ENCODE measurements at regions of chr1 and their contacts with region 1.

Region 1: DNA sequence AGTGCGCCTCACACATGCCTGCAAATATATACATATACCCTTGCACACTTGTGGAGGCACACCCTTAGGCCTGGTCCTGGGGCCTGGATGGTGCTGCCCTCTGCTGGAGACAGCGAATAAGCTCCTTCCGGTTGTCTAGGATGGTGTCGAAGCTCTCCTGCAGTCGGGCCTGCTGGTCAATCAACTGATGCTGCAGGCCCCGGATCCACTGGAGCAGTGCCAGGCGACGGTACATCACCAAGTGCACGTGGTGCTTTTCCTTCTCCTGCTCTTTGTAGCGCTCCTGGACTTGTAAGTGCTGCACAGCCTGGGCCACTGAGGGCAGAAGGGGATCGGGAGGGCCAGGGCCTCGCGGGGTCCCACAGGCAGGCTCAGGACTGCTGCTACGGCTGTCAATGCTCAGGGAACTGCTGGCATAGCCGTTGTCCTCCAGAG is 3.1 kb downstream of the C1orf216 start:
- DNase-seq: peak; percentile 82
- H3K4me3 Mint-ChIP-seq: no peak overlapping the region
- H3K27ac Mint-ChIP-seq: no peak overlapping the region
- H3K4me1 Mint-ChIP-seq: peaks cover 37% of the 10 kb centered on the region
- H3K27me3 Mint-ChIP-seq: no peaks in the 10 kb centered on the region
- CTCF ChIP-seq: peak; percentile 80

Region 2: GRCh38 chr1:35519432-35519831 is 196.2 kb before region 1 on chr1:
- CTCF ChIA-PET with region 1: no interaction called
- POLR2A ChIA-PET with region 1: no interaction called
- intact Hi-C with region 1: no loop called
- DNase-seq: no peak
- H3K4me3 Mint-ChIP-seq: no peak overlapping the region
- H3K27ac Mint-ChIP-seq: no peak overlapping the region
- H3K4me1 Mint-ChIP-seq: no peaks in the 10 kb centered on the region
- H3K27me3 Mint-ChIP-seq: no peaks in the 10 kb centered on the region
- CTCF ChIP-seq: no peak

Region 3: GRCh38 chr1:35569936-35570335 is 145.6 kb before region 1 on chr1:
- CTCF ChIA-PET with region 1: interaction called, 29 read pairs
- POLR2A ChIA-PET with region 1: interaction called, 3 read pairs
- intact Hi-C with region 1: loop called (anchors 1 kb)
- DNase-seq: no peak
- H3K4me3 Mint-ChIP-seq: no peak overlapping the region
- H3K27ac Mint-ChIP-seq: no peak overlapping the region
- H3K4me1 Mint-ChIP-seq: peaks cover 18% of the 10 kb centered on the region
- H3K27me3 Mint-ChIP-seq: peaks cover 9% of the 10 kb centered on the region
- CTCF ChIP-seq: no peak

Region 4: GRCh38 chr1:35641233-35641866 is 74.2 kb before region 1 on chr1 and contains the start of gene PSMB2:
- CTCF ChIA-PET with region 1: interaction called, 12 read pairs
- POLR2A ChIA-PET with region 1: interaction called, 14 read pairs
- intact Hi-C with region 1: loop called (anchors 2 kb)
- DNase-seq: peak; percentile 96
- H3K4me3 Mint-ChIP-seq: peak within 1 kb of the TSS; percentile 99
- H3K27ac Mint-ChIP-seq: peak within 1 kb of the TSS; percentile 100
- H3K4me1 Mint-ChIP-seq: peaks cover 7% of the 10 kb centered on the region
- H3K27me3 Mint-ChIP-seq: peaks cover 12% of the 10 kb centered on the region
- CTCF ChIP-seq: no peak
- total RNA-seq, gene PSMB2: 82.6 and 93.9 TPM in 2 replicates

Region 5: GRCh38 chr1:35737120-35737519 is 21.5 kb after region 1 on chr1:
- CTCF ChIA-PET with region 1: interaction called, 11 read pairs
- POLR2A ChIA-PET with region 1: interaction called, 3 read pairs
- intact Hi-C with region 1: no loop called
- DNase-seq: no peak
- H3K4me3 Mint-ChIP-seq: no peak overlapping the region
- H3K27ac Mint-ChIP-seq: no peak overlapping the region
- H3K4me1 Mint-ChIP-seq: no peaks in the 10 kb centered on the region
- H3K27me3 Mint-ChIP-seq: no peaks in the 10 kb centered on the region
- CTCF ChIP-seq: no peak

Region 6: DNA sequence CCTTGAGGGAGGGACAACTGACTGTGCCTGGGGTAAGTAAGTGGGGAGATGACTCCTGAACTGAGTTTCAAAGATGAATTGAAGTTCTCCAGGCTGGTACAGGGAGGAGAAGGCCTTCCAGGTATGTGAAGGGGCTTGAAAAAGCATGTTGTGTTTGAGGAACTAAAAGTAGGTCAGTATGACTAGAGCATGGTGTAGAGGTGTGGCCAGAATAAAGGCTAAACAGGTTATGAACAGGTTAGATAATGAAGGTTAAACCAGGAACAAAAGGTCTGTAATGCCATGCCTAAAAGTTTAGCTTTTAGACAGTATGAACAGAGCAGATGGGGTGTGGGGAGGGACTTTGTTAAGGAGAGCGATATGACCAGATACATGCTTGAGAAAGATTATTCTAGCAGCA is 61.5 kb after region 1 on chr1:
- CTCF ChIA-PET with region 1: interaction called, 14 read pairs
- POLR2A ChIA-PET with region 1: no interaction called
- intact Hi-C with region 1: loop called (anchors 5 kb)
- DNase-seq: no peak
- H3K4me3 Mint-ChIP-seq: no peak overlapping the region
- H3K27ac Mint-ChIP-seq: no peak overlapping the region
- H3K4me1 Mint-ChIP-seq: no peaks in the 10 kb centered on the region
- H3K27me3 Mint-ChIP-seq: no peaks in the 10 kb centered on the region
- CTCF ChIP-seq: no peak